Transverse colon (tissue), 4 donors: ENCODE measurements at regions of chr2 and their contacts with region 1.

Region 1: GRCh38 chr2:221309892-221310583 is 262.1 kb downstream of the EPHA4 start:
- DNase-seq: no peak
- H3K4me3 ChIP-seq: no peak overlapping the region
- H3K27ac ChIP-seq: no peak overlapping the region
- H3K4me1 ChIP-seq: peaks cover 0 to 10% (median 5%) of the 10 kb centered on the region in 4 donors
- H3K27me3 ChIP-seq: no peaks in the 10 kb centered on the region
- CTCF ChIP-seq: no peak
- EP300 ChIP-seq: no peak
- POLR2A ChIP-seq: no peak

Region 2: DNA sequence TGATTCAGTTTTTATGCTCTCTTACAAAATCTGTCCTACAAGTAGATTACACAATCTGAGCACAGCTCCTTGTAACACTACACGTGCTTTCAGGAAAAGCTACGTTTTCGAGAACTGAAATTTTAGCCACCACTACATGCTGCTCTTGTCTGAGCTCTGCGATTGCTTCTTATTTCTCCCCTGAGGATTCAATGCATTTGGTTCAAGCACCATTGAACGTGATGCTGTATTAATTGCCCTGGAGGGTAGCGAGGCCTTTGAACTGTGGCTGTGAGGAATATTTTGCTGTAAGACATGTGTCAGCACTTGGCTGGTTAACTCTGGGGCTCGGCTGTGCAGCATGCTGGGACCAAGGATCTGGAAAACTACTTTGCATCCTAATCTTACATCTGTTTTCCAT is 143.7 kb before region 1 on chr2:
- in situ Hi-C with region 1: no loop called
- intact Hi-C with region 1: loop called (anchors 2 kb)
- DNase-seq: no peak
- H3K4me3 ChIP-seq: no peak overlapping the region
- H3K27ac ChIP-seq: no peak overlapping the region
- H3K4me1 ChIP-seq: no peaks in the 10 kb centered on the region
- H3K27me3 ChIP-seq: no peaks in the 10 kb centered on the region
- CTCF ChIP-seq: no peak
- EP300 ChIP-seq: no peak
- POLR2A ChIP-seq: no peak

Region 3: DNA sequence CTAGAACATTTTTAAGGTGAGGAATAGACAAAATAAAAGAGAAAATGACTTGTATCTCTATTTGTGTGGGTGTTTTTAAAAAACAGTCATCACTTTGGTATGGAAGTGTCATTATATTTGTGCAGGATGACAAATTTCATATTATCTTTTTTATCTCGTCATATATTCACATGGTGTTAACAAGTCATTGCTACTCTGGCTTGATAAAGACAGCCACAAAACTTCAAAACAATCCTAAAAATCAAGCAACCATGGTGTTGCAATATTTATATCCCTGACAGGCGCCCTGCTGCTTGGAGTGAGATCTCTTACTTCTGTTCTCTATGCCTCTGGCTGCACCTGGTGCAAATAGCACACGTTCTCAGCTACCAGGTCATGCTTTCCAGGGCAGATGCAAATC is 540.0 kb after region 1 on chr2:
- in situ Hi-C with region 1: no loop called
- intact Hi-C with region 1: no loop called
- DNase-seq: no peak
- H3K4me3 ChIP-seq: no peak overlapping the region
- H3K27ac ChIP-seq: no peak overlapping the region
- H3K4me1 ChIP-seq: no peaks in the 10 kb centered on the region
- H3K27me3 ChIP-seq: no peaks in the 10 kb centered on the region
- CTCF ChIP-seq: no peak
- EP300 ChIP-seq: no peak
- POLR2A ChIP-seq: no peak